ENCODE measurements at regions of chr13 and their contacts with region 1.

Region 1: GRCh38 chr13:27461940-27462584 is 11.7 kb upstream of the MTIF3 start:
- DNase-seq: no peak
- ATAC-seq: peak; percentile 75

Region 2: DNA sequence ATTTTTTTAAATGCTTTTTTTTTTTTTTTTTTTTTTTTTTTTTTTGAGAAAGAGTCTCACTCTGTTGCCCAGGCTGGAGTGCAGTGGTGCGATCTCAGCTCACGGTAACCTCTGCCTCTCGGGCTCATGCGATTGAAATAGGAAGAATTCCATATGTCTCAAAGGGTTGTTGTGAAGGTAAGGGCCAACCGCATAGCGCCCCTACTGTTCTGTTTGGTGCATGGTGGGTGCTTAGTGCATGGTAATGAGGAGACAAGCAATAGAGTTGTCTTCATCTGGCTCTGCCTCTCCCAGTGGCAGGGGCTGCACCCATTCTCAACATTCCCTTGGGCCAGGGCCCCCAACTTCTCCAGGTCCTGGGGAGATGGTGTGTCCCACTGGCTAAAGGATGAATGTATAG is 122.8 kb before region 1 on chr13:
- intact Hi-C with region 1: no loop called
- DNase-seq: no peak
- ATAC-seq: no peak

Region 3: DNA sequence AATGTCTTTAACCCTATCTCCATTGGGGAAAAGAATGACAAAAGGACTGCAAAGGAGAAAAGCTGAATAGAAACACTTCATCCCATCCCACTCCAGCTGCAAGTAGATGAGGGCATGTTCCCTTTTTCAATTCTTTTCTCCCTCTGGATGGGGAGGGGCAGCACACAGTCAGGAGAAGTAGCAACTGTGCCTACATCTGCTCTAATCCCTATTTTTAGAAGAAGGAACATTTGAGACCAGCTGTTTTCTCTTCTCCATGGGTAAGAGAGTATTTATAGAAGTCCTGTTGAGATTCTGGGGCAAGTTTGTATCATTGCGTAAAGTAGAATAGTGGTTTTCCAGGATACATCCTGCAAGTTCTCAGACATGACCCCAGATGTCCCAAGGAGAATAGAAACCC is 46.9 kb before region 1 on chr13:
- intact Hi-C with region 1: no loop called
- DNase-seq: no peak
- ATAC-seq: peak; percentile 81

Region 4: GRCh38 chr13:27504128-27504867 is 42.2 kb after region 1 on chr13:
- intact Hi-C with region 1: loop called (anchors 5 kb)
- DNase-seq: no peak
- ATAC-seq: peak; percentile 58

Measured in Right ventricle myocardium inferior (tissue), 1 donor.